Activated CD4-positive, alpha-beta T cell treated with anti-CD3 and anti-CD28 coated beads for 36 hours (primary cell): ENCODE measurements at regions of chr6 and their contacts with region 1.

Region 1: DNA sequence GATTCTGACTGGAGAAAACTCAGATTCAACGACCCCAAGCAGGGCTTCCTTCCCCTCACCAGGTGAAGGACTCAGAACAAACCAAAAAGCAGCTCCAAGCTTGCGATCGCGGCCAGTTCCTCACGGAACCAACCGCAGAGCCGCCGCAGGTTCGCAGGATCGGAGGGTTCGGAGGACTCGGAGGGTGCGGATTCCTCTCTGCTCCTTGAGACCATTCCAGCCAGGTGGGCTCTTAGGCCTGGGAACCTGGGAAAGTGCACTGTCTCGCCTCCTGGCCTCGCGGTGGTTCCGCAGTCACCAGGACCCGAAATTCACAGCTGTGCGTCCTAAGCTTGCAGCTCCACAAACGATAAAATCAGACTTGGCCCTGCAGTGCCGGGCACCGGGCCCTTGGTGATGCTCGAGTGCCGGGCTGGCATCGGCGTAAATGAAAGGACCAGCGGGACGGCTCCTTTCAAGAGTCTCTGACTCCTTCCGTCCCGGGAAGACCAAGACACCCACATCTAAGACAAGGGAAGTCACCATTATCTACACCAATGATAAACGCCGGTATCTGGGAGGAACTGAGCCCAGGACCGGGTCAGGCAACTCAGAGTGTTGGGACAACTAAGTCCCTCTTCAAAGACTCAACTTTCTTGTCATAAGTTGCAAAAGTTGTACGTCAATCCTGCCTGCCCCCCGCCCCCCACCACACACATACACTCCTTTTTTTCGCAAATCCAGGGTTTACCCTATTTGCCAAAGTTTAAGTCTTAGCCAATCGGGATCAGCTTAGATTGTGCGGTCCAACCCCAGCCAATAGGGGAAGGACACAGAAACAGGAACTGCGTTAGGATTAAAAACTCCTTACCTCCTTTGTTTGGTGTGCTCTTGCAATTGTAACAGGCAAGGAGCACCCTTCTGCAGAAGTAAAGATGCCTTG is 69.8 kb upstream of the PRSS16 start:
- DNase-seq: peak; percentile 86
- ATAC-seq: peak; percentile 89
- H3K4me3 Mint-ChIP-seq: peak overlapping the region; percentile 88
- H3K27ac Mint-ChIP-seq: peak overlapping the region; percentile 87
- H3K4me1 Mint-ChIP-seq: peaks cover 2% of the 10 kb centered on the region
- H3K27me3 Mint-ChIP-seq: no peaks in the 10 kb centered on the region

Region 2: GRCh38 chr6:27157459-27158315 is 20.1 kb before region 1 on chr6:
- CTCF ChIA-PET with region 1: interaction called, 14 read pairs
- POLR2A ChIA-PET with region 1: interaction called, 6 read pairs
- intact Hi-C with region 1: loop called (anchors 2 kb)
- DNase-seq: peak; percentile 91
- ATAC-seq: peak; percentile 84
- H3K4me3 Mint-ChIP-seq: peak overlapping the region; percentile 78
- H3K27ac Mint-ChIP-seq: peak overlapping the region; percentile 92
- H3K4me1 Mint-ChIP-seq: peaks cover 46% of the 10 kb centered on the region
- H3K27me3 Mint-ChIP-seq: no peaks in the 10 kb centered on the region

Region 3: GRCh38 chr6:27237089-27237803 is 59.5 kb after region 1 on chr6:
- CTCF ChIA-PET with region 1: interaction called, 4 read pairs
- POLR2A ChIA-PET with region 1: no interaction called
- intact Hi-C with region 1: loop called in 1 of 2 experiments (anchors 5 kb)
- DNase-seq: peak; percentile 83
- ATAC-seq: peak; percentile 60
- H3K4me3 Mint-ChIP-seq: peak overlapping the region; percentile 54
- H3K27ac Mint-ChIP-seq: no peak overlapping the region
- H3K4me1 Mint-ChIP-seq: peaks cover 24% of the 10 kb centered on the region
- H3K27me3 Mint-ChIP-seq: peaks cover 63% of the 10 kb centered on the region

Region 4: GRCh38 chr6:27388293-27389197 is 210.8 kb after region 1 on chr6 and contains the start of gene ZNF391:
- CTCF ChIA-PET with region 1: no interaction called
- POLR2A ChIA-PET with region 1: no interaction called
- intact Hi-C with region 1: loop called in 1 of 2 experiments (anchors 5 kb)
- DNase-seq: peak; percentile 81
- ATAC-seq: peak; percentile 95
- H3K4me3 Mint-ChIP-seq: peak within 1 kb of the TSS; percentile 95
- H3K27ac Mint-ChIP-seq: peak within 1 kb of the TSS; percentile 93
- H3K4me1 Mint-ChIP-seq: peaks cover 14% of the 10 kb centered on the region
- H3K27me3 Mint-ChIP-seq: peaks cover 6% of the 10 kb centered on the region
- total RNA-seq, gene ZNF391: 4.3 to 6.2 TPM

Region 5: DNA sequence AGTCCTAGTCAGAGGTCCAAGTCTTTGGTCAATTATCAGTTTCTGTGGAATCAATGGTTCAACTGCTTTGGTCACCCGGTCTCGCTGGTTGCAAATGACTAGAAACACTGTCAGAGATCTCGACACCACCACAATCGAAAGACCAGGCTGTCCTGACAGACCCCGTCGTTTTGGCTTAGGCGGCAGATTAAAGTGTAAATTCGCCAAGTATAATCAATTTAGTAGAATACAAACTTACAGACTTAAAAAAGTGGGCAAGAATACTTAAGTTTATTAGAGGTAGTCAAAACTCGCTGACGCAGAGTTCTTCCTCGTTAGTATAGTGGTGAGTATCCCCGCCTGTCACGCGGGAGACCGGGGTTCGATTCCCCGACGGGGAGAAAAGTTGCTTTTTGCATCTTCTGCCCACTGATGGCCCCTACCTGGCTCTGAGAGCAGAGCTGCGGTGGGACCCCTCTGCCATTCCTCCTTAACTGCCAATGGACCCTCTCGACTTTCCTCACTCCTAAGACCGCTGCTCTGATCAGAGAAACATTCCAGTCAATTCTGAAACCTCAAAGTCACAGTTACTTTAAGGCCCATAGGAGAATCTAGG is 325.8 kb after region 1 on chr6:
- CTCF ChIA-PET with region 1: interaction called, 5 read pairs
- POLR2A ChIA-PET with region 1: no interaction called
- intact Hi-C with region 1: loop called (anchors 1 to 2 kb)
- DNase-seq: peak; percentile 87
- ATAC-seq: peak; percentile 40
- H3K4me3 Mint-ChIP-seq: peak overlapping the region; percentile 88
- H3K27ac Mint-ChIP-seq: peak overlapping the region; percentile 83
- H3K4me1 Mint-ChIP-seq: peaks cover 26% of the 10 kb centered on the region
- H3K27me3 Mint-ChIP-seq: peaks cover 4% of the 10 kb centered on the region

Region 6: DNA sequence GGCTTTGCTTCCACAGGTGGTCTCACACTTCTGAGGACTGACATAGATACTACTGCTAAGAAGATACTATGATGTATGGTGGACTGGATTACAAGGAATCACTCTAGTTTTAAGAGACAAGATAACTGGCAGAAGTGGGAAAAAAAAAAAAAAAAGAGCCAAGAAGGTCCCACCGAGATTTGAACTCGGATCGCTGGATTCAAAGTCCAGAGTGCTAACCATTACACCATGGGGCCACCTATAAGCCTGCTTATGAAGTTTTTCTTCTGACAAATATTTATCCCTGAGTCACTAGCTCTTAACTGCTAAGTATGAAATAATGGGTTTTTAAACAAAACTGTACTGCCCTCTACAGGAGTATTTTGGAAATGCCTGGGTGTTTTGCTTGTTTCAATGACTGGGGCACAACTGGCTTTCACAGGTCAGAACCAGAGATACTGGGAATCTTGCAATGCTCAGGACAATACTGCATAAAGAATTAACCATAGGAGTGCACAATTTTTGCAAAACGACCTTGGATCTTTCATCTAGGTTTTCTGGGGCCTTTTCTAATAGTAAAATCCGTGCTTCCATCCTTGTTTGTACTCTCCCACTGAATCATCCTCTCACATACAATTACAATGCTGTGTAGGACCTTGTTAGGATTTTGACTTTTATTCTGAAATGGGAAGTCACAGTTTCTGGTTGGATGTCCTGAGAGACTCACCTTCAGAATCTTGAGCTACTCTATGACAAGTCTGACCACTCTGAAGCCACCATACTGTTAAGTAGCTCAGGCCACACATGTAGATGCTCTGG is 618.1 kb after region 1 on chr6:
- CTCF ChIA-PET with region 1: interaction called, 11 read pairs
- POLR2A ChIA-PET with region 1: no interaction called
- intact Hi-C with region 1: no loop called
- DNase-seq: peak; percentile 59
- ATAC-seq: peak; percentile 55
- H3K4me3 Mint-ChIP-seq: no peak overlapping the region
- H3K27ac Mint-ChIP-seq: peak overlapping the region; percentile 13
- H3K4me1 Mint-ChIP-seq: peaks cover 26% of the 10 kb centered on the region
- H3K27me3 Mint-ChIP-seq: peaks cover 6% of the 10 kb centered on the region